SK-N-SH (cell line): ENCODE measurements at regions of chr14 and their contacts with region 1.

Region 1: DNA sequence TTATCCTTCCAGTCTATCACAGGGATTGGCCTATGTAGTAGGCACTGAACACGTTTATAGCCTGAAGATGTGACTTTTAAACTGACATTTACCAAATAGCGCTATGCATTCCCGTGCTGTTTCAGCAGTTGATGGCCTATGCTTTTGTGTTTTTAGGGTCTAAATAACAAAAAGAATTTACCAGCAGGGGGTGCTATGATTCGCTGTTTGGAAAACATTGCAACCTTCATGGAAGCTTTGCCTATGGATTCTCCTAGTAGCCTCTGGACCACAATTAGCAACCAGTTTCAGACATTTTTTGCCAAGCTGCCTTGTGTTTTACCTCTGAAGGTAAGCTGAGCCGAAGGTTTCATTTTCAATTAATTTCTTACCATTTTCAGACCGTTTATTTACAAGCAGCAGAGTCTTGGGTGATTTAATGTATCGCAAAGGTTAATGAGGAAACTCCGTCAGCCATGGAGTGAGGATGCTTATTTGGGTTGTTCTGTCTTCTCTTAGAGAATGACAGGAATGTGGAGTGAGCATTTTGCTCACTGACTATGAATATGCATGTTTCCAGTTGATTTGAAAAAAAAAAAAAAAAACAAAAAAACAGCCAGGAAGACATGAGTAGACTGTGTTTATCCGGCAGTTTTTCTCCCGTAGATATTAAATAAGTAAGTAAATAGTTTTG is 133.1 kb downstream of the PRIMA1 start:
- DNase-seq: peak; percentile 56
- H3K4me3 ChIP-seq: peak overlapping the region in 1 of 2 experiments; percentile 44; a peak in 1 of 4 replicates
- H3K27ac ChIP-seq: no peak overlapping the region
- H3K4me1 ChIP-seq: no peaks in the 10 kb centered on the region; a peak in 1 of 4 replicates
- H3K27me3 ChIP-seq: no peaks in the 10 kb centered on the region
- CTCF ChIP-seq: peak; percentile 47
- EP300 ChIP-seq: no peak
- RAD21 ChIP-seq: peak; percentile 90

Region 2: GRCh38 chr14:92906823-92907222 is 748.4 kb before region 1 on chr14:
- CTCF ChIA-PET with region 1: no interaction called
- POLR2A ChIA-PET with region 1: no interaction called
- DNase-seq: peak; percentile 75
- H3K4me3 ChIP-seq: no peak overlapping the region
- H3K27ac ChIP-seq: peak overlapping the region in 1 of 2 experiments; percentile 93; a peak in 2 of 4 replicates
- H3K4me1 ChIP-seq: peaks cover 0 to 19% of the 10 kb centered on the region in 2 experiments; a peak in 1 of 4 replicates
- H3K27me3 ChIP-seq: no peaks in the 10 kb centered on the region
- CTCF ChIP-seq: no peak
- EP300 ChIP-seq: peak in 1 of 2 experiments; percentile 91; a peak in 2 of 4 replicates
- RAD21 ChIP-seq: peak; percentile 37

Region 3: DNA sequence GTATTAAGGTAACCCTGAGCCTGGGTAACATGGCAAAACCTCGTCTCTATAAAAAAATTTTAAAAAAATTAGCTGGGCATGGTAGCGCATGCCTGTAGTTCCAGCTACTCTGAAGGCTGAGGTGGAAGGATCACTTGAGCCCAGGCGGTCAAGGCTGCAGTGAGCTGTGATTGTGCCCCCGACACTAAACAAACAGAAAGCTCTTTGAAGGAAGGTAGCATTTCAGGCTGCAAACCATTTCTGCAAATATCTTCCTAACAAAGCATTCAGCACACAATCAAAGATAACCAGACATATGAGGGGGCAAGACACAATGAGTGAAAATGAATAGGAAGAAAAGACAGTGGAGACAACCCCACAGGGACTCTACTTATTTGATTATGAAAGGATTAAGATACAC is 14.4 kb after region 1 on chr14:
- CTCF ChIA-PET with region 1: interaction called, 16 read pairs
- POLR2A ChIA-PET with region 1: no interaction called
- DNase-seq: no peak
- H3K4me3 ChIP-seq: no peak overlapping the region
- H3K27ac ChIP-seq: no peak overlapping the region
- H3K4me1 ChIP-seq: no peaks in the 10 kb centered on the region
- H3K27me3 ChIP-seq: no peaks in the 10 kb centered on the region
- CTCF ChIP-seq: no peak
- EP300 ChIP-seq: no peak
- RAD21 ChIP-seq: no peak

Region 4: DNA sequence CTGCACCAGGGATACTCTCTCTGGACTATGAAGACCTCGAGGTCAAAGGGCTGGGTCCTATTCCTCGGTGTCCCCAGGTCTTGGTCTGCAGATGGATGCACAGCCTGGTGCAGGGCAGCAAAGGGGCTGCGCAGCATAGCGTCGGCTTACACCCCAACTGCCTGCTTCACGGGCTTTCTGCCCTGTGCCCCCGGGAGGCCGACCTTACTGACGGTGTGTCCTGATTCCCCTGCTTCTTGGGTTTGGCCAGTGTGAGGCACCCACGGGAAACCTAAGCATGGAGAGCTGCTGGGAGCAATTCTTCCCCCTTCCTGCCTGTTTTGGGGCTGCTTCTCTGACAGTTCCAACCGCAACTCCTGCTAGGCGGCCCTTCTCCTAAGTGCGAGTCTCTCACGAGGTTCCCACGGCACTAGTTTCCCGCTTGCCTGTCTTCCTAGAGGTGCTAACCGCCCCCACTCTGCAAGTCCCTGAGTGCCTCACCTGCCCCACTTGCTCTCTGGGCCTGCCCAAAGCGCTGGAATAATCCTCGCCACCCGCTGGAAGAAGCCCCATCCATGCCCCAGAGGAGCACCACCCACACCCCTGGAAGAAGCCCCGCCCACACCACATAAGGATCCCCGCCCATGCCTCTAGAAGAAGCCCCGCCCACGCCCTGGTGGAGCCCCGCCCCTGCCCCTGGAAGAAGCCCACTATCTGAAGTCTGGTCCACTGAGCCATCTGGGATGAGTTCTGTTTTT is 79.0 kb after region 1 on chr14:
- CTCF ChIA-PET with region 1: interaction called, 10 read pairs
- POLR2A ChIA-PET with region 1: no interaction called
- DNase-seq: peak; percentile 92
- H3K4me3 ChIP-seq: no peak overlapping the region
- H3K27ac ChIP-seq: peak overlapping the region in 1 of 2 experiments; percentile 56; a peak in 2 of 4 replicates
- H3K4me1 ChIP-seq: peaks cover 0 to 36% of the 10 kb centered on the region in 2 experiments; a peak in 2 of 4 replicates
- H3K27me3 ChIP-seq: no peaks in the 10 kb centered on the region
- CTCF ChIP-seq: no peak
- EP300 ChIP-seq: no peak
- RAD21 ChIP-seq: no peak

Region 5: GRCh38 chr14:93759719-93760307 is 104.6 kb after region 1 on chr14:
- CTCF ChIA-PET with region 1: interaction called, 14 read pairs
- POLR2A ChIA-PET with region 1: no interaction called
- DNase-seq: peak; percentile 61
- H3K4me3 ChIP-seq: no peak overlapping the region
- H3K27ac ChIP-seq: peak overlapping the region in 1 of 2 experiments; percentile 91; a peak in 2 of 4 replicates
- H3K4me1 ChIP-seq: peaks cover 0 to 53% of the 10 kb centered on the region in 2 experiments; a peak in 1 of 4 replicates
- H3K27me3 ChIP-seq: no peaks in the 10 kb centered on the region
- CTCF ChIP-seq: no peak
- EP300 ChIP-seq: no peak
- RAD21 ChIP-seq: no peak

Region 6: GRCh38 chr14:93906341-93907329 is 251.4 kb after region 1 on chr14:
- CTCF ChIA-PET with region 1: interaction called, 349 read pairs
- POLR2A ChIA-PET with region 1: interaction called, 3 read pairs
- DNase-seq: peak; percentile 77
- H3K4me3 ChIP-seq: no peak overlapping the region
- H3K27ac ChIP-seq: no peak overlapping the region
- H3K4me1 ChIP-seq: peaks cover 0 to 7% of the 10 kb centered on the region in 2 experiments; a peak in 1 of 4 replicates
- H3K27me3 ChIP-seq: no peaks in the 10 kb centered on the region
- CTCF ChIP-seq: peak; percentile 59
- EP300 ChIP-seq: no peak
- RAD21 ChIP-seq: peak; percentile 84